Stomach (tissue), 19 donors: ENCODE measurements at regions of chr10 and their contacts with region 1.

Region 1: DNA sequence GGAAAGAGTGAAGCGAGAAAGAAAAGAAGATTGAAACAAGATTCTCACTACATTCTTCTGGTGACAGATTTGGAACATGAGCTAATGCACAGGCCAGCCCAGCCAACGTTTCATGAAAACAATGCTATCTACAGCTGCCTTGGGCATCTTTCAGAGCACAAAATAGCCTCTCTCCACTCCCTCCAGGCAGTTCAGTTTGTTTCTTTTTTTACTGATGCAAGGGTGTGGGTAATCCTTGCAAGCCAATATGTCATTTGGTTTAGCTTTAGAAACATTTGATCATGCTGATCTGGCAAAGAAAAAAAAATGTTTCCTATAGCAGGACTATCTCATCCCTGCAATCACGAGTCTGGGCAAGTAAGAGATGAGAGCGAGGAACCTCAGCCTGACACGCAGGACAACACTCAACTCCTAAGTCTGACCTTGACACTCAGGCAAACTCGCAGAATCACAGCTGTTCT is 35.9 kb downstream of the SVIL start:
- DNase-seq: peak in 1 of 2 donors; percentile 70
- H3K4me3 ChIP-seq: no peak overlapping the region
- H3K27ac ChIP-seq: peak overlapping the region in 4 of 5 donors; percentile 41 to 71 (median 61)
- H3K4me1 ChIP-seq: peaks cover 0 to 39% (median 16%) of the 10 kb centered on the region in 4 donors
- H3K27me3 ChIP-seq: no peaks in the 10 kb centered on the region
- CTCF ChIP-seq: no peak
- EP300 ChIP-seq: no peak
- POLR2A ChIP-seq: no peak

Region 2: GRCh38 chr10:29735596-29736318 is 136.9 kb after region 1 on chr10:
- intact Hi-C with region 1: loop called (anchors 10 kb)
- DNase-seq: peak; percentile 86 to 96
- H3K4me3 ChIP-seq: peak overlapping the region; percentile 82 to 93 (median 87)
- H3K27ac ChIP-seq: peak overlapping the region; percentile 86 to 99 (median 96)
- H3K4me1 ChIP-seq: peaks cover 5 to 47% (median 32%) of the 10 kb centered on the region in 4 donors
- H3K27me3 ChIP-seq: no peaks in the 10 kb centered on the region
- CTCF ChIP-seq: peak in 5 of 7 experiments; percentile 76 to 95 (median 87)
- EP300 ChIP-seq: no peak
- POLR2A ChIP-seq: no peak

Region 3: GRCh38 chr10:29857843-29858701 is 259.2 kb after region 1 on chr10:
- intact Hi-C with region 1: no loop called
- DNase-seq: peak; percentile 57 to 78
- H3K4me3 ChIP-seq: no peak overlapping the region
- H3K27ac ChIP-seq: peak overlapping the region in 4 of 5 donors; percentile 22 to 72 (median 38)
- H3K4me1 ChIP-seq: peaks cover 7 to 11% (median 9%) of the 10 kb centered on the region in 4 donors
- H3K27me3 ChIP-seq: no peaks in the 10 kb centered on the region
- CTCF ChIP-seq: peak in 5 of 7 experiments; percentile 6 to 53 (median 46)
- EP300 ChIP-seq: peak; percentile 66
- POLR2A ChIP-seq: no peak